ENCODE measurements at regions of chr6 and their contacts with region 1.

Region 1: GRCh38 chr6:125528621-125529041 is 220.8 kb upstream of the HEY2 start:
- DNase-seq: no peak
- ATAC-seq: no peak
- H3K4me3 ChIP-seq: no peak overlapping the region
- H3K27ac ChIP-seq: no peak overlapping the region
- H3K4me1 ChIP-seq: peaks cover 0 to 12% (median 0%) of the 10 kb centered on the region in 9 donors
- H3K27me3 ChIP-seq: peaks cover 0 to 9% (median 5%) of the 10 kb centered on the region in 7 donors
- CTCF ChIP-seq: no peak

Region 2: DNA sequence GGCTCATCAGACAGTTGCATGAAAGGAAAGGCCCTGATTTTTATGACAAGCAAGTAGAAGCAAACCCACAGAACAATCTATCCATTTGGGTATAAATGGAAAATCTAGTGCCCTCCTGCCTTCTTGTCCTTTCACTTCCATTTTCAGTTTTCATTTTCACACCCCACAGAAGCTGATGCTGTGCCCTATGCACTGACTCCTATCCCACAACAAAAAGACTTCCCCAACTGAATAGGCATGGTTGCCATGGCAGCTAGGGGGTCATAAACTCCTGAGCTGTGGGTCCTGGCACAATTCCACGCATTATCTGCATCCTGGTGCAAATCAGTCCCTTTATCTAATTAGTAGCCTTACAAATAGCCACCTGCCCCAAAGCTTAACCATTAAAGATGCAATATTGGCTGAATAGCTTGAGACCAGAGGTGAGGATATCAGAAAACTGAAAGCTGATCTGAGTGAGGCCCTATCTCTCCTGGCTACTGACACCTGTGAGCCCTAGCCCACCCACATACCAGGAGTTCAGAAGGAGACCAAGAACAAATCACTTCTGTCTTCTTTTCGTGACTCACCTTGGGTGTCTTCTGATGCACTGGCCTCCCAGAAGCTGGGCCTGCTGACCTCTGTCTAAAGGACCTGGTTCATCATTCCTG is 185.9 kb after region 1 on chr6:
- intact Hi-C with region 1: loop called in 1 of 10 experiments (anchors 10 kb)
- DNase-seq: no peak
- ATAC-seq: no peak
- H3K4me3 ChIP-seq: no peak overlapping the region
- H3K27ac ChIP-seq: no peak overlapping the region
- H3K4me1 ChIP-seq: peaks cover 0 to 3% (median 0%) of the 10 kb centered on the region in 9 donors
- H3K27me3 ChIP-seq: no peaks in the 10 kb centered on the region
- CTCF ChIP-seq: no peak